ENCODE measurements at regions of chr12 and their contacts with region 1.

Region 1: DNA sequence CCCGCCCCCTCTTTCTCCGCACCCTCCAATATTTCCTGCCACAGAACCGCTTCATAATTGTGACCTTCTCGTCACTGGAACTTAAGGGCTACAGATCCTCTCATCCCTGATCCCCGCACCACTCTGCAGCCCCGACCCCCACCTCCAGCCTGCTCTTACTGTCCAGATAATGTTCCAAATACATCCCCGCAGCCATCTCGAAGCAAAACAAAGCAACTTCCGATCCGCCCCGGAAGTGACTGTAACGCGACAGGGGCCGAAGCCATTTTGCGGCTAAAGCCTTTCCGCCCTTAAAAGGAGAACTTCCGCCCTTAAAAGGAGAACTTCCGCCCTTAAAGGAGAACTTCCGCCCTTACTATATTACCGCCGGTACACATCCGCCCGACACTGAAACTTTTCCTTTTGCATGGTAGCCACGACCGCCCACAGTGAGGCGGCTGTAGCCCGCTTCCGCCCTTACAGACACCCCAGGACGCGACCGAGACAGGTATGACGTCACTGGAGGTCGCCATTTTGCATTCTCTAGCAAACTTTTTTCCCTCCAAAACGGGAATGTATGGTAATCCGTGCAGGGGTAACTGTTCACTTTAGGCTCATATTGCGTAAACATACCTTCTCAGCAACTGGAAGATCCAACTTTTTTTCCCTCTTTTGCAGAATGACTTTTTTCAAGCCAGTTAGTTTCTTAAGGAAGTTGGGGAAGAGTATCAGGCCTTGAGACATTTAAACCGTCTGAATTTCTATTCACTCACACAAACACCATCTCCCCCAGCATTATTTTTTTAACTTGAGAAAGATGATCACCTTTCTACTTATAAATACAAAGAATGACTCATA is at the start of gene ING4:
- DNase-seq: peak; percentile 79 to 99 (median 98)
- ATAC-seq: peak; percentile 99
- H3K4me3 ChIP-seq: peak within 1 kb of the TSS; percentile 92
- H3K4me3 Mint-ChIP-seq: peak within 1 kb of the TSS; percentile 92 to 99 (median 96)
- H3K27ac ChIP-seq: peak within 1 kb of the TSS; percentile 80
- H3K27ac Mint-ChIP-seq: peak within 1 kb of the TSS; percentile 91 to 99 (median 96)
- H3K4me1 ChIP-seq: peaks cover 15 to 16% of the 10 kb centered on the region in 2 donors
- H3K4me1 Mint-ChIP-seq: peaks cover 18 to 47% (median 36%) of the 10 kb centered on the region in 7 donors
- H3K27me3 ChIP-seq: no peaks in the 10 kb centered on the region
- H3K27me3 Mint-ChIP-seq: peaks cover 0 to 2% (median 0%) of the 10 kb centered on the region in 5 donors
- total RNA-seq, gene ING4: 33.1 to 101 (median 39.6) TPM

Region 2: DNA sequence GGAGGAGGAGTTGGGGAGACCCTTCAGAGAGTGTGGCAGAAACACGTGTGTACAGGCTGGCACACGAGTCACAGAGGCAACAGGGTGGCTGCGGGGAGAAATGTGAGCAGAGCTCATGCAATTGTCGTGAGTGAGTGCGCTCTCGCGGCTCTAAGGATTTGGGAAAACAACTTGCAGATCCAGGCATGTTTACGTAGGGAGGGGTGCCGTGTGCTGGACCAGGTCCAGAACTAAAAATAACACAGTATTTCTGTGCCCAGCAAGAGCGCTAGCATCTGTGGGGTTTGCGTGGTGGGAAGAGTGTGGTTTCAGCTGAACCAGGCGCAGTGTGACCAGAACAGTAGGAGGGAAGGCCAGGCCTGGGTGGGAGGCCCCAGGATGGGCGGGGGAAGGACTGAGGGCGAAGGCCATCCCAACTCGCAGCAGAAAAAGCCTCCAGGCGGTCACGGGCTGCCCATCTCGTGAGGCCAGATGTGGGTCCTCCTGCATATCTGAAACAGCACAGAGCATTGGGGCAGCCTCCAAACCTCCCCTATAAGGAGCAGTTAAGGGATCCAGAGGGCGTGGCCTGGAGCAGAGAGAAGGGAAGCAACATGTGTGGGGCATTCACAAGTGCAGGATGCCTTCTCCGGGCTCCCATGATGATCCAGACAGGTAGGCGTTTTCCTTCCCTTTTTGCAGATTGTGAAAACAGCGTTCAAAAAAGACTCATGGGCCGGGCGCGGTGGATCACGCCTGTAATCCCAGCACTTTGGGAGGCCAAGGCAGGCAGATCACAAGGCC is 480.8 kb before region 1 on chr12:
- CTCF ChIA-PET with region 1: no interaction called
- POLR2A ChIA-PET with region 1: no interaction called
- intact Hi-C with region 1: no loop called
- DNase-seq: no peak
- ATAC-seq: no peak
- H3K4me3 ChIP-seq: no peak overlapping the region
- H3K4me3 Mint-ChIP-seq: no peak overlapping the region
- H3K27ac ChIP-seq: no peak overlapping the region
- H3K27ac Mint-ChIP-seq: no peak overlapping the region
- H3K4me1 ChIP-seq: no peaks in the 10 kb centered on the region
- H3K4me1 Mint-ChIP-seq: peaks cover 0 to 7% (median 0%) of the 10 kb centered on the region in 7 donors
- H3K27me3 ChIP-seq: no peaks in the 10 kb centered on the region
- H3K27me3 Mint-ChIP-seq: peaks cover 0 to 12% (median 2%) of the 10 kb centered on the region in 5 donors

Region 3: DNA sequence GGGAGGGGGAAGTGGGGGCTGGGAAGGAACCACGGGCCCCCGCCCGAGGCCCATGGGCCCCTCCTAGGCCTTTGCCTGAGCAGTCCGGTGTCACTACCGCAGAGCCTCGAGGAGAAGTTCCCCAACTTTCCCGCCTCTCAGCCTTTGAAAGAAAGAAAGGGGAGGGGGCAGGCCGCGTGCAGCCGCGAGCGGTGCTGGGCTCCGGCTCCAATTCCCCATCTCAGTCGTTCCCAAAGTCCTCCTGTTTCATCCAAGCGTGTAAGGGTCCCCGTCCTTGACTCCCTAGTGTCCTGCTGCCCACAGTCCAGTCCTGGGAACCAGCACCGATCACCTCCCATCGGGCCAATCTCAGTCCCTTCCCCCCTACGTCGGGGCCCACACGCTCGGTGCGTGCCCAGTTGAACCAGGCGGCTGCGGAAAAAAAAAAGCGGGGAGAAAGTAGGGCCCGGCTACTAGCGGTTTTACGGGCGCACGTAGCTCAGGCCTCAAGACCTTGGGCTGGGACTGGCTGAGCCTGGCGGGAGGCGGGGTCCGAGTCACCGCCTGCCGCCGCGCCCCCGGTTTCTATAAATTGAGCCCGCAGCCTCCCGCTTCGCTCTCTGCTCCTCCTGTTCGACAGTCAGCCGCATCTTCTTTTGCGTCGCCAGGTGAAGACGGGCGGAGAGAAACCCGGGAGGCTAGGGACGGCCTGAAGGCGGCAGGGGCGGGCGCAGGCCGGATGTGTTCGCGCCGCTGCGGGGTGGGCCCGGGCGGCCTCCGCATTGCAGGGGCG is 129.0 kb before region 1 on chr12 and contains the start of gene GAPDH:
- CTCF ChIA-PET with region 1: no interaction called
- POLR2A ChIA-PET with region 1: no interaction called
- intact Hi-C with region 1: loop called in 1 of 2 experiments (anchors 1 kb)
- DNase-seq: peak; percentile 66 to 94 (median 83)
- ATAC-seq: peak; percentile 66
- H3K4me3 ChIP-seq: peak within 1 kb of the TSS; percentile 97
- H3K4me3 Mint-ChIP-seq: peak within 1 kb of the TSS; percentile 90 to 99 (median 94)
- H3K27ac ChIP-seq: peak within 1 kb of the TSS; percentile 81
- H3K27ac Mint-ChIP-seq: peak within 1 kb of the TSS; percentile 92 to 100 (median 94)
- H3K4me1 ChIP-seq: peaks cover 31 to 43% of the 10 kb centered on the region in 2 donors
- H3K4me1 Mint-ChIP-seq: peaks cover 28 to 59% (median 42%) of the 10 kb centered on the region in 7 donors
- H3K27me3 ChIP-seq: no peaks in the 10 kb centered on the region
- H3K27me3 Mint-ChIP-seq: peaks cover 0 to 2% (median 0%) of the 10 kb centered on the region in 5 donors
- total RNA-seq, gene GAPDH: 330 to 4,503 (median 379) TPM

Region 4: GRCh38 chr12:6563448-6564050 is 99.6 kb before region 1 on chr12:
- CTCF ChIA-PET with region 1: no interaction called
- POLR2A ChIA-PET with region 1: no interaction called
- intact Hi-C with region 1: loop called (anchors 1 kb)
- DNase-seq: peak; percentile 36 to 68 (median 52)
- ATAC-seq: peak; percentile 43
- H3K4me3 ChIP-seq: no peak overlapping the region
- H3K4me3 Mint-ChIP-seq: peak overlapping the region in 2 of 10 donors; percentile 6 to 55
- H3K27ac ChIP-seq: no peak overlapping the region
- H3K27ac Mint-ChIP-seq: peak overlapping the region in 7 of 9 donors; percentile 9 to 86 (median 78)
- H3K4me1 ChIP-seq: peaks cover 8 to 14% of the 10 kb centered on the region in 2 donors
- H3K4me1 Mint-ChIP-seq: peaks cover 22 to 54% (median 41%) of the 10 kb centered on the region in 7 donors
- H3K27me3 ChIP-seq: no peaks in the 10 kb centered on the region
- H3K27me3 Mint-ChIP-seq: no peaks in the 10 kb centered on the region

Region 5: GRCh38 chr12:6613776-6614512 is 49.2 kb before region 1 on chr12:
- CTCF ChIA-PET with region 1: no interaction called
- POLR2A ChIA-PET with region 1: interaction called, 5 read pairs
- intact Hi-C with region 1: loop called (anchors 1 to 2 kb)
- DNase-seq: peak in 2 of 9 donors; percentile 28 to 32
- ATAC-seq: peak; percentile 74
- H3K4me3 ChIP-seq: no peak overlapping the region
- H3K4me3 Mint-ChIP-seq: peak overlapping the region in 7 of 10 donors; percentile 30 to 70 (median 36)
- H3K27ac ChIP-seq: peak overlapping the region; percentile 64
- H3K27ac Mint-ChIP-seq: peak overlapping the region; percentile 51 to 91 (median 87)
- H3K4me1 ChIP-seq: peaks cover 20 to 30% of the 10 kb centered on the region in 2 donors
- H3K4me1 Mint-ChIP-seq: peaks cover 26 to 54% (median 48%) of the 10 kb centered on the region in 7 donors
- H3K27me3 ChIP-seq: no peaks in the 10 kb centered on the region
- H3K27me3 Mint-ChIP-seq: no peaks in the 10 kb centered on the region

Region 6: DNA sequence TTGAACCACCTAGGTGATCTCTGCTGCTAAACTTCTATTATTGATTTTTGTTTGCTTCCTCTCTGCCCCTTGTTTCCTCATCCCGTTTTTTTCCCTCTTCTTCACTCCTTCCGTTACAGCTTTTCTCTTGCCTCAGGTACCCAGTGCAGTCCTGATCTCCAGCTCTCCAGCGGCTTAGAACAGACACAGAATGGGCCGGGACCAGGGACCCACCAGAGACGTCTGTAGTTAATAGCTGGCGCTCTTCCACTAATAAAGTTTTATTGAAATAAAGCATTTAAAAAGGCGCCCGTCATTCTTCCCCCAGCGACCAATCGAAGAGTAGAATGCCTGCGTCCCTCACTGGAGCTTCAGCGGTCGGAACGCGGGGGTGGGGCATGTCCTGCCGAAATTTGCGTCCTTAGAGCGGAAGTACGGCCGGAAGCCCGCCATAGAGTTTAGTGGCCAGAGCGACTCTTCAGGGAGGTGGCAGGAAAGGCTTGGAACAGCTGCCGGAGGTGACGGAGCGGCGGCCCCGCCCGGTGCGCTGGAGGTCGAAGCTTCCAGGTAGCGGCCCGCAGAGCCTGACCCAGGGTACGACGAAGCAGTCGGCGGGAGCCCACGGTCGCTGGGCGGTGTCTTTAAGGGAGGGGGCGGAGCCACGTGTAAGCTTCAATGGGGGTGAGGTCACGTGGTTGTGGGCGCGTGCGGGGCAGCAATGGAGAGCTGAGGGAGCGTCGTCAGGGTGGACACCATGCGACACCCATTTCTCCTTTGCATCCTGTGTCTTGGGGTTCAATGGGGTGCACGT is 60.7 kb after region 1 on chr12 and contains the start of gene COPS7A:
- CTCF ChIA-PET with region 1: no interaction called
- POLR2A ChIA-PET with region 1: interaction called, 3 read pairs
- intact Hi-C with region 1: loop called (anchors 1 kb)
- DNase-seq: peak; percentile 77 to 94 (median 90)
- ATAC-seq: peak; percentile 93
- H3K4me3 ChIP-seq: peak within 1 kb of the TSS; percentile 63
- H3K4me3 Mint-ChIP-seq: peak within 1 kb of the TSS; percentile 80 to 97 (median 92)
- H3K27ac ChIP-seq: peak within 1 kb of the TSS; percentile 75
- H3K27ac Mint-ChIP-seq: peak within 1 kb of the TSS; percentile 90 to 98 (median 96)
- H3K4me1 ChIP-seq: peaks cover 10 to 11% of the 10 kb centered on the region in 2 donors
- H3K4me1 Mint-ChIP-seq: peaks cover 24 to 34% (median 27%) of the 10 kb centered on the region in 7 donors
- H3K27me3 ChIP-seq: no peaks in the 10 kb centered on the region
- H3K27me3 Mint-ChIP-seq: no peaks in the 10 kb centered on the region
- total RNA-seq, gene COPS7A: 21.9 to 38.7 (median 30.1) TPM

Region 7: DNA sequence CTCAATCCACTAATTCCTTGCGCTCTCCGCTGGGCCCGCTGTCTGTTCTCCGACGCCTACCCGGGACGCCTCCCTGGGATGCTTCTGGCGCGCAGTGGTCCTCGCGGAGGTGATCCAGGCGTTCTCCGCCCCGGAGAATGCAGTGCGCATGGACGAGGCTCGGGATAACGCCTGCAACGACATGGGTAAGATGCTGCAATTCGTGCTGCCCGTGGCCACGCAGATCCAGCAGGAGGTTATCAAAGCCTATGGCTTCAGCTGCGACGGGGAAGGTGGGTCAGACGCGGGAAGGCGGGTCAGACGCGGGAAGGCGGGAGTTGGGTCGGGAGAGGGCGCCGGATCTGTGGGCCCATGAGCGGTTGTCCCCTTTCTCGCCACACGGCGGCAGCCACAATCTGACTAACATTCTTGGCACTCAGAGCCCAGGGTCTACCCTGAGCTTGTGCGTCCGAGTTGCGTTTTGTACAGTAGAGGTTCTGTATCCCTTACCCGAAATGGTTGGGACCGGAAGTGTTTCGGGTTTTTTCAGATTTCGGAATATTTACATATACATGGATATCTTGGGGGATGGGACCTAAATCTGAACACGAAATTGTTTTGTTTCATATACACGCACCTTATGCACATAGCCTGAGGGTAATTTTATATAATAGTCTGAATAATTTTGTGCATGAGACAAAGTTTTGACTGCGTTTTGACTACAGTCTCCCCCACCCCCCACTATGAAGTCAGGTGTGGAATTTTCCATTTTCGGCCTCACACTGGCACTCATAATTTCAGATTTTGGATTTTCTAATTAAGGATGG is 281.5 kb after region 1 on chr12:
- CTCF ChIA-PET with region 1: no interaction called
- POLR2A ChIA-PET with region 1: no interaction called
- intact Hi-C with region 1: loop called in 1 of 2 experiments (anchors 1 kb)
- DNase-seq: peak; percentile 70 to 87 (median 84)
- ATAC-seq: peak; percentile 65
- H3K4me3 ChIP-seq: peak overlapping the region; percentile 94
- H3K4me3 Mint-ChIP-seq: peak overlapping the region; percentile 88 to 100 (median 96)
- H3K27ac ChIP-seq: peak overlapping the region; percentile 95
- H3K27ac Mint-ChIP-seq: peak overlapping the region; percentile 95 to 100 (median 98)
- H3K4me1 ChIP-seq: peaks cover 56% of the 10 kb centered on the region in 2 donors
- H3K4me1 Mint-ChIP-seq: peaks cover 42 to 75% (median 60%) of the 10 kb centered on the region in 7 donors
- H3K27me3 ChIP-seq: no peaks in the 10 kb centered on the region
- H3K27me3 Mint-ChIP-seq: no peaks in the 10 kb centered on the region

Region 8: GRCh38 chr12:7439579-7440505 is 776.7 kb after region 1 on chr12:
- CTCF ChIA-PET with region 1: no interaction called
- POLR2A ChIA-PET with region 1: no interaction called
- intact Hi-C with region 1: no loop called
- DNase-seq: peak in 6 of 9 donors; percentile 8 to 47 (median 22)
- ATAC-seq: peak; percentile 60
- H3K4me3 ChIP-seq: no peak overlapping the region
- H3K4me3 Mint-ChIP-seq: peak overlapping the region; percentile 69 to 85 (median 76)
- H3K27ac ChIP-seq: no peak overlapping the region
- H3K27ac Mint-ChIP-seq: peak overlapping the region in 5 of 9 donors; percentile 19 to 84 (median 81)
- H3K4me1 ChIP-seq: no peaks in the 10 kb centered on the region
- H3K4me1 Mint-ChIP-seq: peaks cover 0 to 8% (median 5%) of the 10 kb centered on the region in 7 donors
- H3K27me3 ChIP-seq: peaks cover 6 to 7% of the 10 kb centered on the region in 2 donors
- H3K27me3 Mint-ChIP-seq: peaks cover 38 to 56% (median 45%) of the 10 kb centered on the region in 5 donors

Measured in naive thymus-derived CD4-positive, alpha-beta T cell (primary cell).